Tibial artery (tissue), 4 donors: ENCODE measurements at regions of chr13 and their contacts with region 1.

Region 1: GRCh38 chr13:60654415-60654814 is 257.4 kb downstream of the TDRD3 start:
- DNase-seq: peak in 1 of 2 donors; percentile 37
- H3K4me3 ChIP-seq: no peak overlapping the region
- H3K27ac ChIP-seq: no peak overlapping the region
- H3K4me1 ChIP-seq: no peaks in the 10 kb centered on the region
- H3K27me3 ChIP-seq: no peaks in the 10 kb centered on the region
- CTCF ChIP-seq: peak; percentile 32 to 52

Region 2: DNA sequence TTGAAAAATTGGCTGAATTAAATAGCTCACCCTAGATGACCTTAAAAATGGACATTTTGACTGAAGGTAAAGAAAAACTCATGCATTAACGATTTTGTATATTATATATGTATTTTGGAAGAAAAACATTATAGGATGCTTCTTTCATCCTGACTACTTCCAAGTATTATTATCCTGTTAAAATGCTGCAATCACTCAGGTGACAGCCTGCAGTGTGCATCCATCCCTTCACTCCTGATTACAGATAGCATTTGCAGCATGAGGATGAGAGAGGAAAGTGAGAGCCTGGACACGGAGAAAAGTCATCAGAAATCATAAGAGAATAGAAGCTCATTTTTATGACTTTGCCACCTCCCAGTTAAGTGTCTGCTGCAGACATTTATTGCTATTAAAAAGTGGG is 1967.3 kb before region 1 on chr13:
- intact Hi-C with region 1: no loop called
- DNase-seq: no peak
- H3K4me3 ChIP-seq: no peak overlapping the region
- H3K27ac ChIP-seq: no peak overlapping the region
- H3K4me1 ChIP-seq: no peaks in the 10 kb centered on the region
- H3K27me3 ChIP-seq: no peaks in the 10 kb centered on the region
- CTCF ChIP-seq: no peak

Region 3: GRCh38 chr13:60356970-60357369 is 297.4 kb before region 1 on chr13:
- intact Hi-C with region 1: no loop called
- DNase-seq: no peak
- H3K4me3 ChIP-seq: no peak overlapping the region
- H3K27ac ChIP-seq: no peak overlapping the region
- H3K4me1 ChIP-seq: no peaks in the 10 kb centered on the region
- H3K27me3 ChIP-seq: no peaks in the 10 kb centered on the region
- CTCF ChIP-seq: no peak

Region 4: DNA sequence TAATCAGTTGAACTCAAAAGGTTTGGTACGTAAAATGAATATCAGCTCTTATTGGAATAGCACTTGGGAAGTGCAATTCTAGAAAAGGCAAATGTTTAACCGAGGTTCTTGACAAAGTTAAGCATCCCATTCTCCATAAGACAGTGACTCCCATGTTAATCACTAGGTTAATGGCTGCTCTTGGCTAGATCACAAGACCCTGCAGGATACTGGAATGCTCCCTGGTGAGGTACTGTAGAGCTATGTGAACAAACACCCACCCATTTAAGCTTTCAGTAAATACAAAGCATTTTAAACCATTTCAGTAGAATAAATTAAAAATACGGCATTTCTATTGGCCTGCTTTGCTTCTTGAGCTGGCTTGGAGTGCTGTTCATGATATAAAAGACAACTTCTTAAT is 200.9 kb before region 1 on chr13:
- intact Hi-C with region 1: no loop called
- DNase-seq: no peak
- H3K4me3 ChIP-seq: no peak overlapping the region
- H3K27ac ChIP-seq: no peak overlapping the region
- H3K4me1 ChIP-seq: peaks cover 0 to 9% (median 0%) of the 10 kb centered on the region in 4 donors
- H3K27me3 ChIP-seq: no peaks in the 10 kb centered on the region
- CTCF ChIP-seq: no peak

Region 5: GRCh38 chr13:61410669-61411297 is 756.4 kb after region 1 on chr13:
- intact Hi-C with region 1: loop called (anchors 10 kb)
- DNase-seq: no peak
- H3K4me3 ChIP-seq: no peak overlapping the region
- H3K27ac ChIP-seq: no peak overlapping the region
- H3K4me1 ChIP-seq: peaks cover 0 to 38% (median 8%) of the 10 kb centered on the region in 4 donors
- H3K27me3 ChIP-seq: no peaks in the 10 kb centered on the region
- CTCF ChIP-seq: peak in 1 of 2 experiments; percentile 35